Caco-2 (cell line): ENCODE measurements at regions of chr11 and their contacts with region 1.

Region 1: DNA sequence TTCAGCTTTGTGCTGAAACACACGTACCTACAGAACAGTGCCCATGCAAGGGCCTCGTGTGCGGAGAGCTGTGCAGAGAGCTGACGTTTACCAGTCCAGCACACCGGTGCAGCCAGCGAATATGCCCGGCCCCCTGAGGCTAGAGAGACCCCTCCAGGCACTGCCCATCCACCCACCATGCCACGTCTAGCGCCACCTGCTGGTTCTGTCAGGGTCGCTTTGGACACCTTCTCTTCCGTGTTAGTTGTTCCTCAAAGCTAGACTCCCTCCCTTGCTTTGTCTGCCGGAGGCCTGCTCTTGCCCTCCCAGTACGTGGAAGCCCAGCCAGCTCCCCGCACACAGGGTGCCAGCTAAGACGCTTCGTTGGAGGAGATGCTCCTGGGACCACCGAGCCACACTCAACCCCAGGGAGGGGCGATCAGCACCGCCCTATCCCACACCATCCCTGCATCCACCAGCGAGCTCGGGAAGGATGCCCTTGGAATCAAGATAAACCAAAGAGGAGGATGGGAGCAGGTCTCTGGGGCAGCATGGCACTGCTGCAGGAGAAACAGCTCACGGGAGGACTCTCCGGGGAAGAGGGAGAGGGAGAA is 43.4 kb downstream of the CPT1A start:
- DNase-seq: peak in 1 of 2 experiments; percentile 60
- H3K4me3 ChIP-seq: no peak overlapping the region
- H3K4me3 Mint-ChIP-seq: no peak overlapping the region
- H3K27ac Mint-ChIP-seq: no peak overlapping the region
- H3K4me1 ChIP-seq: no peaks in the 10 kb centered on the region
- H3K4me1 Mint-ChIP-seq: no peaks in the 10 kb centered on the region
- H3K27me3 ChIP-seq: no peaks in the 10 kb centered on the region
- H3K27me3 Mint-ChIP-seq: no peaks in the 10 kb centered on the region
- CTCF ChIP-seq: peak; percentile 73 to 83

Region 2: DNA sequence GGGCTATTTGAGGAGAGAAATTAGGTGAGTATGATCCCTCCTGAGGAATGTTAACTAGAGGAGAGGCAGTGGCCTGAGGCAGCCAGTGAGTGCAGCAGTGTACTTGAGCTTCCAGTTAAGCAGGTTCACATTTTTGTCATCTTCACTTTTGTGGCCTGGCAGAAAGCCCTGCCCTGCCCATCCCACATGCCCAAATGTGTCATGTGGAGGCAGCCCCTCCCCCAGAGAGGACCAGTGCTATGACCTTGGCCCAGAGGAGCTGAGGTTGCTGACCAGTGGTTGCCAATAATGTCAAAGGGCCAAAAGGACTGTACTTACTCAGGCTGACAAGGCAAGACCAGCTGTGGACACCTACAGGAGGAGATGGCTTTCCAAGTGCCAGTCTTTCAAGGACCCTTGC is 1549.7 kb before region 1 on chr11:
- CTCF ChIA-PET with region 1: no interaction called
- POLR2A ChIA-PET with region 1: interaction called, 12 read pairs
- intact Hi-C with region 1: no loop called
- DNase-seq: peak; percentile 92 to 95
- H3K4me3 ChIP-seq: no peak overlapping the region
- H3K4me3 Mint-ChIP-seq: peak overlapping the region; percentile 52
- H3K27ac Mint-ChIP-seq: peak overlapping the region; percentile 85
- H3K4me1 ChIP-seq: peaks cover 26% of the 10 kb centered on the region
- H3K4me1 Mint-ChIP-seq: peaks cover 44% of the 10 kb centered on the region
- H3K27me3 ChIP-seq: no peaks in the 10 kb centered on the region
- H3K27me3 Mint-ChIP-seq: no peaks in the 10 kb centered on the region
- CTCF ChIP-seq: no peak

Region 3: GRCh38 chr11:68855205-68855981 is 57.1 kb after region 1 on chr11:
- CTCF ChIA-PET with region 1: no interaction called
- POLR2A ChIA-PET with region 1: no interaction called
- intact Hi-C with region 1: no loop called
- DNase-seq: no peak
- H3K4me3 ChIP-seq: no peak overlapping the region
- H3K4me3 Mint-ChIP-seq: no peak overlapping the region
- H3K27ac Mint-ChIP-seq: no peak overlapping the region
- H3K4me1 ChIP-seq: peaks cover 20% of the 10 kb centered on the region
- H3K4me1 Mint-ChIP-seq: peaks cover 13% of the 10 kb centered on the region
- H3K27me3 ChIP-seq: no peaks in the 10 kb centered on the region
- H3K27me3 Mint-ChIP-seq: no peaks in the 10 kb centered on the region
- CTCF ChIP-seq: no peak